H1 (cell line): ENCODE measurements at regions of chr10 and their contacts with region 1.

Region 1: GRCh38 chr10:24383681-24384106 is 174.8 kb downstream of the KIAA1217 start:
- DNase-seq: peak; percentile 75
- H3K4me3 ChIP-seq: no peak overlapping the region
- H3K27ac ChIP-seq: peak overlapping the region; percentile 33; the same call in 1 of the 2 replicates
- H3K4me1 ChIP-seq: peaks cover 6 to 16% (median 11%) of the 10 kb centered on the region in 4 experiments
- H3K27me3 ChIP-seq: no peaks in the 10 kb centered on the region
- CTCF ChIP-seq: peak; percentile 60 to 84 (median 79)
- EP300 ChIP-seq: peak in 1 of 2 experiments; percentile 46; a peak in 1 of 3 replicates
- POLR2A ChIP-seq: no peak
- RAD21 ChIP-seq: peak; percentile 69 to 77

Region 2: DNA sequence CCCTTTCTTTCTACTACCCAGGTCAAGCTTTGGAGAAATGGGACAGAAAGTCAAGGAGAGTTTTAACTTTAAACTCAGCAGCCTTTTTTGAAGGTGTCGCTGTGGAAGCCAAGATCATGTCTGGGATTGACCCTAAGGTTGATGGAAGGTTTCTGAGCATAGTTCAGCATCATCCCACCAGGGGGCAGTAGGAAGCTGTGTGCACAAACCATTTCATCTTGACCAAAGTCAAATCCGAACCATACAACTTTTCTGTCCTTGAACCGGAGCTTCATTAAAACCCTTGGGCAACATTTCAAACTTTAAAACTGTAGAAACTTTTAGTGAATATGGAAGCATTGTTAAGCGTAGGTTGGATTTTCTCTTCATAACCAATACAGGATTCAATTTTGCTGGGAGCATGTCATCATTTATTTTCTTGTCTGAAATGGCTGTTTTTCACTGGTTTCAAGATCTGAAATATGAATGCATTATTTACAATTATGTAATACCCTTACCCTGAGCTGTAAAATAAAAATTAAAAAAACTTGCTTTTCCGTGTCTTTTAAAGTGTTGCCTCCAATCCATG is 389.1 kb before region 1 on chr10:
- CTCF ChIA-PET with region 1: interaction called, 16 read pairs
- POLR2A ChIA-PET with region 1: no interaction called
- DNase-seq: peak; percentile 27 to 84
- H3K4me3 ChIP-seq: no peak overlapping the region
- H3K27ac ChIP-seq: no peak overlapping the region
- H3K4me1 ChIP-seq: no peaks in the 10 kb centered on the region
- H3K27me3 ChIP-seq: no peaks in the 10 kb centered on the region
- CTCF ChIP-seq: peak; percentile 40 to 86 (median 78)
- EP300 ChIP-seq: no peak
- POLR2A ChIP-seq: no peak
- RAD21 ChIP-seq: peak; percentile 94

Region 3: GRCh38 chr10:24360282-24361127 is 23.2 kb before region 1 on chr10:
- CTCF ChIA-PET with region 1: interaction called, 11 read pairs
- POLR2A ChIA-PET with region 1: no interaction called
- DNase-seq: peak in 1 of 2 experiments; percentile 71
- H3K4me3 ChIP-seq: no peak overlapping the region
- H3K27ac ChIP-seq: no peak overlapping the region
- H3K4me1 ChIP-seq: peaks cover 5 to 13% (median 8%) of the 10 kb centered on the region in 4 experiments; a peak in 6 of 7 replicates
- H3K27me3 ChIP-seq: no peaks in the 10 kb centered on the region
- CTCF ChIP-seq: peak; percentile 59 to 72 (median 68)
- EP300 ChIP-seq: no peak
- POLR2A ChIP-seq: no peak
- RAD21 ChIP-seq: peak; percentile 85 to 88

Region 4: DNA sequence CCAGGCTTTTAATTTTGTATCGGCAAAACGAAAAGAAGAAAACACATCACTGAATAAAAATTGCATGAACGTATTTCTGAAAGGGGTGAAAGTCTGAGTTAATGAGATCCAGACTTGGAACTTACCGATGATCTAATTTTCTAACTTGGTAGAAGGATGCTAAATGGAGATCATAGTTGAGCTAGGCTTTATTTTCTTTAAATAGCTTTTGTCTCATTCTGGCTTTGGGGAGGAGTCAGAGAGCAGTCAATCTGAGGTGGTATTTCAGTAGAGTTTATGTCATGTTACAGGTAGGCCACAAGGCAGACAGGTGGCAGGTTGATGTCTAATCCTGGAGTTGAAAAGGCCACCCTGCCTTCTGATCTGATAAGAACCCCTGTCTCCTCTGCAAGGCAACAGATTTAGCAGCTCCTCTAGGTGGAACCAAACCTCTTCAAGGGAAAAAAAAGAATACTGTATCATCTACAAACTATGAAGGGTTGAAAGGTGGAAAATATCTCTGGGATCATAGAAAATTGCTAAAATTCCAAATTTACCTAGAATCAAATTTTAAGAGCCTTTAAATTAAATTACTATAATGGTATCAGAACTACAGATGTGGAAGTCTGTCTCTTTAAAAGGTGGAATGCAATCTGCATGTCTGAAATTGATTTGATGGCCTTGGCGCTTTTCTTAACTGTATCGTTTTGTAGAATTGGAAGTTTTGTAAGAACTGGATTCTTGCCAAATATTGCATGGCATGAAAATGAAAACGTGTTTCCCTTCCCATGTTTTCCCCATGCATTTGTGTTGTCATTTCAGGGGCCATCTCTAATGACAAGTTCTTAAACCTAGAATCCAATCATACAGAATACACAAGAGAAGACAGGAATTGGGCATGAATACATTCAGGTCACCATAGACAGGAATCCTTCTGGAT is 12.6 kb before region 1 on chr10:
- CTCF ChIA-PET with region 1: interaction called, 23 read pairs
- POLR2A ChIA-PET with region 1: interaction called, 4 read pairs
- DNase-seq: no peak
- H3K4me3 ChIP-seq: no peak overlapping the region
- H3K27ac ChIP-seq: no peak overlapping the region
- H3K4me1 ChIP-seq: peaks cover 3 to 11% (median 9%) of the 10 kb centered on the region in 4 experiments; a peak in 6 of 7 replicates
- H3K27me3 ChIP-seq: no peaks in the 10 kb centered on the region
- CTCF ChIP-seq: no peak
- EP300 ChIP-seq: no peak
- POLR2A ChIP-seq: no peak
- RAD21 ChIP-seq: no peak